Posterior cingulate gyrus (tissue), 11 donors: ENCODE measurements at regions of chr13 and their contacts with region 1.

Region 1: DNA sequence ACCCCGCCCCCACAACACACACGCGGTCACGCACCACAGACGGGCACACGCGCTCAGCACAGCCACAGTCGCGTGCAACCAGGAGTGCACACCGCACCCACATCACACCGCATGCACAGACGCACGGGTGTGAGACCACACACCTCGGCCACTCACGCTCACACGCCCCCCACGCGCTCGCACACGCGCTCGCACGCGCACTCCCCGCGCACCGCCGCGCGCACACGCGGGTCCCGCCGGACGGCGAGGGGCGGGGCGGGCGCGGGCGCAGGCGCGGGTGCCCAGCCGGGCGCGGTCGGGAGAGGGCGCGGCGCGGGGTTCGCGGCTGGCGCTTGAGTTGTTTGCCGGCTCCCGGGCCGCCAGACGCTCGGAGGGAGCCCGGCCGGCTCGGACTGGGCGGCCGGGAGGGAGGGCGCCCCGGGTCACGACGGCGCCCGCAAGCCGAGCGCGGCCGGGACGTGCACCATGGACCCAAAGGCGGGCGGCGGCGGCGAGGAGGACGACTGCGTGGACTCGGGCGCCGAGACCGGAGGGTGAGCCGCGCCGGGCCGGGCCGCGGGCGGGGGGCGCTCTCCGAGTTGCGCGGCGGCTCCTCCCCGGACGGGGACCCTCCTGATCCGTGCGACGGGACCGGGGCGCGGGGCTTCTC is at the start of gene FAM124A:
- DNase-seq: peak; percentile 47 to 96 (median 56)

Region 2: DNA sequence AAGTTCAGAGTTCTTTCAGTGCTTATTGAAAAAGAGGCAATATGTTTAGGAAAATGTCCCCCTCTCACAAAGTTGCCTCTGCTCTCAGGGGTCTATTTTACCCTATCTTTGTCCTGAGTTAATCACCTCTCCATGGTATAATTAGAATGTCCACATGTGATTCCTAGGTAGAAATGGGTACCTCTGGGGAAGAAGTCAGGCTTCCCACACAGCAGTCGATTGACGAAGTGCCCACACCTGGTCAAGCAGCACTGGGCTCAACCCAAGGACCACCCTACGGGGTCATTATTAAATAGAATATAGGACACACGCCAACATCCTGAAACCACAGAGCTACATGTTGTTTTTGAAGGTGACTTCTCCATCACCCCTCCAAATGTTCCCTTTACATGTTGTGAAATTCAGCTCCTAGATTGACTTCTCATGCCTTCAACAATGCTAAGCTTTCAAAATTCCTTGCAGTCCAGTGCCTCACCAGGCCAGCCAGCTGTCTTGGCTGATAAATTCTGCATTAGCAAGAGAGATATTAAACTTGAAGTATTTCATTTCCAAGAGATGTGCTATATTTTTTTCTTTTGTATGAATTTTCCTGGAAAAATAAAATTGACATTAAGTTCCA is 43.6 kb before region 1 on chr13:
- intact Hi-C with region 1: no loop called
- DNase-seq: no peak

Region 3: DNA sequence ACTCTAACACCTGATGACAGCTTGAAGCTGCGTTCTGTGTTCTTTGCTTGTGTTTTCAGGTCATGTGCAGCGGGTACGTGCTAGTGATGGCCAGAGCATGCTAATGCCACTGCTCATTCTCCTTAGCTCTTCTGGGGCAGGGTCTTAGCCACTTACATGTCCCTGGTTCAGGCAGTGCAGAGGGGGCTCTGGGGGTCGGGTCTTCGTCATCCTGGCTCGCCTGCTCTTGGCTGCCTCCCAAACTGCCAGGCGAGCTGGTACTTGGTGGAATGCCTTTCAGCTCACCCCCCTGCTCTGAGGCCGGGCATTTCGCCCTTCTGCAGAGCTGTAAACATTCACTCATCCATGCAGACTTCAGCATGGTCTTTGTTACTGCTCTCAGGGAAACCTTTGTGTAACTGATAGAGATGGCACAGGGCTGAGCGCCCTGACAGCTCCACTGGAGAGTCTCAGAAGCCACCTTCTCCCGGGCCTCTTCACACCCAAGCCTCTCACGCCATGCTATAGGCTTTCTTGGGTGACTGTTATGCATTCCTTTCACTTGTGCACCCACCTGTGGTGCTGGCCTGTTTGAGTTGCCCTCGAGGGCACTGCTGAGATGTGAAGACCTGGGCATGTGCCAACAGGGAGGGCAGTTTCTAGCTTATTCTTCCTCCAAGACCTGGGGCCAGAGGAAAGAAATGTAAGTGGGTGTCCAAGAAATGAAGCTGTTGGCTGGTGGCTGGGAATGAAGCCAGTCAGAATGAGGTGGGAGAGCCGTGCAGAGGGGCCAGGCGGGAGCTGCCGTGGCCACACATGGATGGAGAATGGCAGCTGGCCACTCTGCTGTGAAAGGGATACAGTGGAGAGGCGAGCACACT is 24.5 kb after region 1 on chr13:
- intact Hi-C with region 1: loop called (anchors 2 kb)
- DNase-seq: peak; percentile 65 to 97 (median 78)

Region 4: DNA sequence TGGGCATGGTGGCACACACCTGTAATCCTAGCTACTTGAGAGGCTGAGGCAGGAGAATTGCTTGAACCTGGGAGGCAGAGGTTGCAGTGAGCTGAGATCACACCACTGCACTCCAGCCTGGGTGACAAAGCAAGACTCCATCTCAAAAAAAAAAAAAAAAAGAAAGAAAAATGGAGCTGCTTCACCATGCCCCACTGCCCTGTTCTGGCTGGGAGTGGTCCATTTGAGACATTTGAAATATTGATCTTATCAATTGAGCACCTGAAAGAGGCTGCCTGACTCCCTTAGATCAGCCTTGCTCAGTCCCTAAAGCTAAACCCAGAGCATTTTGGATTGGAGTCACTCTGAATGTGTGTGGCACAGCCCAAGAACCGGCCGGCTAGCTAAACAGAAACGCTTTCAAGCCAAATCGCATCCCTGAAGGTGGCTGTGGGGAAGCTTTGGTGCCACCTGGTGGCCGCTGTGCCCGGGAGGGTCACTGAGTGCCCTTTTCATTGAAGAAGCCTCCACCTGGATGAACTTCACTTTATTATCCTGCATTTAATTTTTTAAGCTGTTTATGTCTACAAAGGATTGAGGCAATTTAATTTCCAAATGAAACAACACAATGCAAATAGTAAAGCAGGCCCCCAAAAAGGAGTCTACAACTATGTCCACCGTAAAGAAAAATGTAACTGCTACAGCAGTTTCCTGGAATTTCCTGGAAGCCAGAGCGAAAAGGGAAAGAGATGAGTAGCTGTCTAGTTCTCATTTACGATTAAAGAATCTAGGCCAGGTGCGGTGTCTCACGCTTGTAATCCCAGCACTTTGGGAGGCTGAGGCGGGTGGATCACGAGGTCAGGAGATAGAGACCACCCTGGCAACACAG is 64.2 kb after region 1 on chr13:
- intact Hi-C with region 1: loop called (anchors 5 kb)
- DNase-seq: peak; percentile 75 to 97 (median 90)